T-cell (primary cell): ENCODE measurements at regions of chrX and their contacts with region 1.

Region 1: GRCh38 chrX:124232523-124233201 is 99.8 kb upstream of the TEX13D start:
- DNase-seq: no peak
- ATAC-seq: no peak
- H3K4me3 ChIP-seq: no peak overlapping the region
- H3K4me3 Mint-ChIP-seq: no peak overlapping the region
- H3K27ac ChIP-seq: no peak overlapping the region
- H3K27ac Mint-ChIP-seq: peak overlapping the region in 1 of 2 donors; percentile 46
- H3K4me1 ChIP-seq: peaks cover 2 to 16% of the 10 kb centered on the region in 2 experiments
- H3K4me1 Mint-ChIP-seq: peaks cover 13 to 28% (median 22%) of the 10 kb centered on the region in 3 donors
- H3K27me3 ChIP-seq: no peaks in the 10 kb centered on the region
- H3K27me3 Mint-ChIP-seq: peaks cover 0 to 4% of the 10 kb centered on the region in 2 donors

Region 2: GRCh38 chrX:124358800-124359383 is 126.2 kb after region 1 on chrX:
- CTCF ChIA-PET with region 1: interaction called in 1 of 2 experiments, 10 read pairs
- POLR2A ChIA-PET with region 1: no interaction called
- DNase-seq: peak in 1 of 35 experiments; percentile 54
- ATAC-seq: peak; percentile 77 to 86 (median 78)
- H3K4me3 ChIP-seq: peak overlapping the region in 1 of 2 donors; percentile 3
- H3K4me3 Mint-ChIP-seq: peak overlapping the region; percentile 45 to 69 (median 59)
- H3K27ac ChIP-seq: peak overlapping the region; percentile 42
- H3K27ac Mint-ChIP-seq: peak overlapping the region; percentile 79 to 91
- H3K4me1 ChIP-seq: peaks cover 21 to 30% of the 10 kb centered on the region in 2 experiments
- H3K4me1 Mint-ChIP-seq: peaks cover 54 to 61% (median 60%) of the 10 kb centered on the region in 3 donors
- H3K27me3 ChIP-seq: no peaks in the 10 kb centered on the region
- H3K27me3 Mint-ChIP-seq: peaks cover 0 to 6% of the 10 kb centered on the region in 2 donors